ENCODE measurements at regions of chr20 and their contacts with region 1.

Region 1: DNA sequence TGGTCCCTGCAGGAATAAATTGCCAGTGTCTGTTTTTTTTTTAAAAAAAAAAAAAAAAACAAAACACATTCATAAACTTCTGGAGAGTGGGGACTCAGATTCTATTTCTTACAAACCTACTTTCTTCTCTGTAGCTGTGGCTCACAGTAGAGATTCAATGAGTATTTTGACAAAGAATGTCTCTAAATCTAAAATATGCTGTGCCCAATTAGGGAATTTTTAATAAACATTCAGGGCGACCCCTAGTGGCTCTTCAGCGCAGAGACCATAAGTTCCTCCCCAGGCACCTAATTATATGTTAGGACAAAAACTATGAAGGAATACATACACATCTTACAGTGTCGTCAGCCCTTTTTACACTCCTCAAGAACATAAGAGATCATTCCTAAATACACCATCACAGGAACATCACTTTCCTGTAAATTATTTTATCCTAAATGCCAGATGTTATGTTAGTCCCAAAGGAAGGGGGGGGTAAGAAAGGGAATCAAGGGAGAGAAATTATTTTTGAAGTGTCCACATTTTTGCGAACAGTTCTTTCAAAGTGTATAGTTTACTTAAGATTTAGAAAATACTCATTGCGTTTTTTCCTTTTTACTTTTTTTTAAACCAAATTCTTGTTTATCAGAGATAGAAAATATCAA is 21.8 kb upstream of the NAA20 start:
- DNase-seq: peak in 4 of 5 donors; percentile 44 to 52 (median 46)
- H3K4me3 ChIP-seq: no peak overlapping the region
- H3K4me3 Mint-ChIP-seq: no peak overlapping the region
- H3K27ac ChIP-seq: no peak overlapping the region
- H3K27ac Mint-ChIP-seq: no peak overlapping the region
- H3K4me1 ChIP-seq: no peaks in the 10 kb centered on the region
- H3K4me1 Mint-ChIP-seq: peaks cover 0 to 4% (median under 1%) of the 10 kb centered on the region in 4 donors
- H3K27me3 ChIP-seq: no peaks in the 10 kb centered on the region
- H3K27me3 Mint-ChIP-seq: peaks cover 2 to 5% of the 10 kb centered on the region in 2 donors

Region 2: GRCh38 chr20:19692685-19693119 is 302.6 kb before region 1 on chr20:
- CTCF ChIA-PET with region 1: interaction called, 12 read pairs
- POLR2A ChIA-PET with region 1: no interaction called
- intact Hi-C with region 1: no loop called
- DNase-seq: peak in 4 of 5 donors; percentile 10 to 15 (median 12)
- H3K4me3 ChIP-seq: no peak overlapping the region
- H3K4me3 Mint-ChIP-seq: peak overlapping the region in 1 of 8 donors; percentile 15
- H3K27ac ChIP-seq: no peak overlapping the region
- H3K27ac Mint-ChIP-seq: no peak overlapping the region
- H3K4me1 ChIP-seq: no peaks in the 10 kb centered on the region
- H3K4me1 Mint-ChIP-seq: peaks cover 0 to 5% (median 2%) of the 10 kb centered on the region in 4 donors
- H3K27me3 ChIP-seq: no peaks in the 10 kb centered on the region
- H3K27me3 Mint-ChIP-seq: peaks cover 6 to 18% of the 10 kb centered on the region in 2 donors

Region 3: GRCh38 chr20:19903168-19903811 is 92.1 kb before region 1 on chr20:
- CTCF ChIA-PET with region 1: interaction called, 4 read pairs
- POLR2A ChIA-PET with region 1: no interaction called
- intact Hi-C with region 1: loop called (anchors 1 kb)
- DNase-seq: peak in 4 of 5 donors; percentile 9 to 22 (median 14)
- H3K4me3 ChIP-seq: no peak overlapping the region
- H3K4me3 Mint-ChIP-seq: no peak overlapping the region
- H3K27ac ChIP-seq: no peak overlapping the region
- H3K27ac Mint-ChIP-seq: peak overlapping the region in 1 of 7 donors; percentile 34
- H3K4me1 ChIP-seq: no peaks in the 10 kb centered on the region
- H3K4me1 Mint-ChIP-seq: peaks cover 0 to 4% (median 2%) of the 10 kb centered on the region in 4 donors
- H3K27me3 ChIP-seq: no peaks in the 10 kb centered on the region
- H3K27me3 Mint-ChIP-seq: no peaks in the 10 kb centered on the region

Measured in CD4-positive, alpha-beta memory T cell (primary cell).